Activated T-helper 2 cell treated with anti-CD3 and anti-CD28 coated beads, Interferon-gamma antibody, Interleukin-2, Interleukin-4, amounts not matched to agents 10 μg/mL and 5 μg/mL and 100 μg/mL, durations not matched to agents 14 hours and 24 hours and 36 hours (primary cell): ENCODE measurements at regions of chr15 and their contacts with region 1.

Region 1: GRCh38 chr15:52331490-52332240 is 36.1 kb upstream of the MYO5C start:
- DNase-seq: peak; percentile 54
- H3K4me3 Mint-ChIP-seq: peak overlapping the region; percentile 19
- H3K27ac Mint-ChIP-seq: peak overlapping the region; percentile 66
- H3K4me1 Mint-ChIP-seq: peaks cover 24% of the 10 kb centered on the region
- H3K27me3 Mint-ChIP-seq: no peaks in the 10 kb centered on the region

Region 2: DNA sequence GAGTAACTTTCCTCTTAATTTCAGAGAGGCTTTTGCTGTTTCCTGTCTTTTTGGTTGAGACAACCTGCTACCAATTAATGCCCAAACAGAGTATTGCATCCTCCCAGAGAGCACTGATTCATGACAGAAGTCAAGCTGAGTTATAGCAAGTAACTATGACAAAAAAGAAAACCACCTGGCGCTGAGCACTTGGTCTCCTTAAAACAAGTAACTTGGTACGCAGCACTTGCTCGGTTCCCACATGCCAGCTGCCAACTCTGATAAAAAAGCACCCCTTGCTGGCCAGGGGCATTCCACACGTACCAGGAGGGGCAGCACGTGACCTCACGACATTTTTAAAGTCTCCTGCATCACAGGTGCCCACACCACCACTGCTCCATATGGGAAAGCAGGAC is 22.5 kb before region 1 on chr15:
- intact Hi-C with region 1: no loop called
- DNase-seq: no peak
- H3K4me3 Mint-ChIP-seq: no peak overlapping the region
- H3K27ac Mint-ChIP-seq: no peak overlapping the region
- H3K4me1 Mint-ChIP-seq: peaks cover under 1% of the 10 kb centered on the region
- H3K27me3 Mint-ChIP-seq: no peaks in the 10 kb centered on the region

Region 3: GRCh38 chr15:52481915-52482314 is 150.2 kb after region 1 on chr15:
- intact Hi-C with region 1: loop called (anchors 2 kb)
- DNase-seq: peak; percentile 64
- H3K4me3 Mint-ChIP-seq: peak overlapping the region; percentile 66
- H3K27ac Mint-ChIP-seq: peak overlapping the region; percentile 80
- H3K4me1 Mint-ChIP-seq: peaks cover 64% of the 10 kb centered on the region
- H3K27me3 Mint-ChIP-seq: no peaks in the 10 kb centered on the region

Region 4: DNA sequence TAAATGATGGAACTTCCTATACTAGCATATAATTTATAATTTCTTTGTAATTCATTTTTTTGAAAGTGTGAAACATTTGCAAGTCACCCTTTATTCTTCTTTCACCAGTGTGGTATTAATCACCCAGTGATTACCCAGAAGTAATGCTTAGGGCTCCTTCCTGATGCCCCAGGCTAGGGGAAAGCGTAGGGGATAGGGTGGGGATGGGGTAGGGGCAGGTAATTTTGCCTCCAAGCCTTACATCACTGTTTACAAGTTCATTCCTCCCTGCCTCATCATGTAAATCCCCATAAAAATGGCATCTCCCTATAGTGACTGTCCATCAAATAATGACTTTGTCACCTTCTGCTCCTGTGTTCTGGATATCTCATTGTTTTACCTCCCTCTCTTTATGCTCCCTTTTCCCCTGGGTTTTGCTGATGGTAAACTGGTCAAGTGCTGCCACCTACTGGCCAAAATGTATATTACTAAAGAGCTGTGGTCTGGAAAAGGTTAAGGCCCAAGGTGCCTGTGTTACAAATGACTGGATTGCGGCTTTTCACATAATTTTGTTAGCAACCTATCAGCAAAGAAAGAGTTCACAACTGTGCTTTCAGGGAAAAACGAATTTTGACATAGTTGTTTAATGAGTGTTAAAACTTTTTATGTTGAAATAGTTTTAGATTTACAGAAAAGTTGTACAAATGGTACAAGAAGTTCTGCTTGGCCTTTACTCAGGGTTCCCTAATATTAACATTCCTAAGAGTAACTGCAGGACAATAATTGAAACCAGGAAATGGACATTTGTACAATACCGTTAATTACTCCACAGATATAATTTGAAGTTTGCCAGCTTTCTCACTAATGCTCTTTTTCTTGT is 403.8 kb after region 1 on chr15:
- intact Hi-C with region 1: loop called (anchors 1 kb)
- DNase-seq: peak; percentile 64
- H3K4me3 Mint-ChIP-seq: no peak overlapping the region
- H3K27ac Mint-ChIP-seq: no peak overlapping the region
- H3K4me1 Mint-ChIP-seq: peaks cover 16% of the 10 kb centered on the region
- H3K27me3 Mint-ChIP-seq: peaks cover 16% of the 10 kb centered on the region